ENCODE measurements at regions of chr6 and their contacts with region 1.

Region 1: DNA sequence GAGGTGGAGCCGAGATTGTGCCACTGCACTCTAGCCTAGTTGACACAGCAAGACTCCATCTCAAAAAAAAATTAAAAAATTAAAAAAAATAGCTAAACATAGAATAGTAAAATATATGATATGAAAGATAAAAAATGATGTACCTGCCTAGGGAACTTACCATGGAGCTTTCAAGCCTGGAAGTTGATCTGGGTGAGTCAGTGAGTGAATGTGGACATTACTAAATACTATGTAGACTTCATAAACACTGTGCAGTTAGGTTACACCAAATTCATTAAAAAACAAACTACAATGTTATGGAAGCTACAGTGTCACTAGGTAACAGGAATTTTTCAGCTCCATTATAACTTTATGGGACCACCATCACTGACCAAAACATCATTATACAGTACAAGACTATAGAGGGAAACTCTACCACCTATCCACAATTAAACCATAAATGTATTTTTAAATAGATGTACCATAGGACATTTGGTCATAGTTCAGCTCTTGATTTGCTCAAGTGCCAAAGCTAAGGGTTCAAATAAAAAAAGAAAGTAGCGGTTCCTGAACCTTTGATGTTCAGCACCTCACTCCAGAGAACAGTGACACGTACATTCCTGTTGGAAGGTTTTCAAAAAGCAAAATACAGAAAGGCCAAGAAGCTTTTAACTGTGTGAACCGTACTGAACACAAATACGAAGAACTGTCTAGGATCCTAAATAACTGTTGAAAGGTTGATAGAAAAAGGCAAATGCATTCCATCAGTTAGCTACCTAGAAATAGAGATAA is 52.4 kb upstream of the SPDEF start:
- DNase-seq: no peak

Region 2: GRCh38 chr6:34067814-34068213 is 540.7 kb before region 1 on chr6:
- intact Hi-C with region 1: no loop called
- DNase-seq: no peak

Region 3: DNA sequence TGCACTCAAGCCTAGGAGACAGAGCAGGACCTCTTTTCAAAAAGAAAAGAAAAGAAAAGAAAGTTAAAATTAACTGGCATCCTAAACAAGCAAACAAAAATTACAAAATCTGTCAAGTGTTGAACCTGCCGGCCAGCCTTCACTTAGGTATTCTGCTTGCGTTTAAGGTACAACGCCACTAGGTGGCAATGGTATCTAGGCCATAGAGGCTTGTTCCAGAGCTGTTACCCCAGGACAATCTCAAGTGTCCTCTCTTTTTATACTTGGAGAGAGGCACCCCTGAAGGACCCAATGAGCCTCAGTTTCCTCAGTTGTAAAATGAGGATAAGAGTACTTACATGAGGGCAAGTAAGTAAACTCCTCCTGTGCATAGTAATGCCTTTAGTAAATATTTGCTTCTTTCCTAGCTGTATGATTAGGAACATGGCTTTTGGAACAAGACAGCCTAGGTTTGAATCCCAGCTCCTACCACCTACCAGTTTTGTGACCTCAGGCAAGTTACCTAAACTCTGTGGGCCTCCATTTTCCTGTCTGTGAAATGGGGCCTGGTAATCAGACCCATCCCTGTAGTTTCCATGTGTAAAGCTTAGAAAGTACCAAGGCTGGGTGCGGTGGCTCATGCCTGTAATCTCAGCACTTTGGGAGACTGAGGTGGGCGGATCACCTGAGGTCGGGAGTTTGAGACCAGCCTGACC is 148.5 kb before region 1 on chr6:
- intact Hi-C with region 1: loop called (anchors 5 kb)
- DNase-seq: peak in 34 of 42 donors; percentile 16 to 77 (median 48)